Ascending aorta (tissue), 2 donors: ENCODE measurements at regions of chr6 and their contacts with region 1.

Region 1: GRCh38 chr6:28355743-28356665 is 6.3 kb downstream of the ZKSCAN3 start:
- DNase-seq: peak; percentile 23 to 86
- H3K4me3 ChIP-seq: peak overlapping the region; percentile 51 to 64
- H3K27ac ChIP-seq: peak overlapping the region; percentile 53 to 76
- H3K4me1 ChIP-seq: peaks cover 0 to 12% of the 10 kb centered on the region in 2 donors
- H3K27me3 ChIP-seq: no peaks in the 10 kb centered on the region
- CTCF ChIP-seq: peak; percentile 78 to 83 (median 80)

Region 2: GRCh38 chr6:27188885-27189418 is 1167.1 kb before region 1 on chr6:
- intact Hi-C with region 1: loop called (anchors 10 kb)
- DNase-seq: peak in 1 of 2 donors; percentile 76
- H3K4me3 ChIP-seq: peak overlapping the region; percentile 75 to 78
- H3K27ac ChIP-seq: peak overlapping the region; percentile 85 to 90
- H3K4me1 ChIP-seq: peaks cover 0 to 2% of the 10 kb centered on the region in 2 donors
- H3K27me3 ChIP-seq: no peaks in the 10 kb centered on the region
- CTCF ChIP-seq: peak; percentile 63 to 82 (median 71)

Region 3: DNA sequence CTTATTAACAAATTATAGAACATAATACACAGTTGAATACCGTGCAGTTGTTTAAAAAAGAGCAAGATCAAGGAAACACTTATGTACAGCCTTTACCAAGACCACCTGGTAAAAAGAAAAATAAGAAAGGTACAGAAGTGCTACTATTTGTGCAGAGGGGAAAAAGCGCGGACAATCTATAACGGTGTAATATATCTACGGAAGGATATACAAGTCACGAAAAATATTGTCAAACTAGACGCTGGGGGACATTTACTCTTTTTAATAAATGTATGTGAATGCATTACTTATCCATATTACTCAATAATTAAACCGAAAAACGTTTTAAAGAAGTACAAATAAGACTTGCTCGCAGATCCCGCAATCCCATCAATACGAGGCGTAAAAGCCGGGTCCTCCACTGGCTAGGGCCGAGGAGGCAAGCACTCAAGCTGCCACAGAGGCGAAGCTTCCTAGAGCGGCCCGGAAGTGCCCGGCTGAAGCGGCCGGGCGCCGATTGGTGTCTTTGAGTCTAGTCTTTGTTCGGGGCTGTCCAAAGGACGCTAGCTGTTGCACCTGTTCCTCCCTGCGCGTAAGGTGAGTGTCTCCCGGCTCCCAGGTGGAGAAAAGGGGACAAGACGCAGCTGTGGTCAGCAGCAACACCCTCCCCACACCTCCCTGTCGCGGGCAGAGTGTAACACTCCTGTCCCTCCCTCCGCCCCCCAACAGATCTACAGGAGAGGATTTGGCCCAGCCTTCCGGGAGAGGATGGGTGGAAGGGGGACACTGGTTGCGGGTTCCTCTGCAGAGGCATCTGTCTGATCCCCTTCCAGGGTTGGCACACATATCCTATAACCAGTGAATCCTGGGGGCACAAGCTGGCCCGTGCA is 231.7 kb before region 1 on chr6 and contains the start of gene ZSCAN16:
- intact Hi-C with region 1: loop called (anchors 5 kb)
- DNase-seq: peak in 1 of 2 donors; percentile 89
- H3K4me3 ChIP-seq: peak within 1 kb of the TSS; percentile 72 to 84
- H3K27ac ChIP-seq: peak within 1 kb of the TSS; percentile 77 to 78
- H3K4me1 ChIP-seq: peaks cover 3 to 9% of the 10 kb centered on the region in 2 donors
- H3K27me3 ChIP-seq: no peaks in the 10 kb centered on the region
- CTCF ChIP-seq: no peak
- total RNA-seq, gene ZSCAN16: not detected

Region 4: DNA sequence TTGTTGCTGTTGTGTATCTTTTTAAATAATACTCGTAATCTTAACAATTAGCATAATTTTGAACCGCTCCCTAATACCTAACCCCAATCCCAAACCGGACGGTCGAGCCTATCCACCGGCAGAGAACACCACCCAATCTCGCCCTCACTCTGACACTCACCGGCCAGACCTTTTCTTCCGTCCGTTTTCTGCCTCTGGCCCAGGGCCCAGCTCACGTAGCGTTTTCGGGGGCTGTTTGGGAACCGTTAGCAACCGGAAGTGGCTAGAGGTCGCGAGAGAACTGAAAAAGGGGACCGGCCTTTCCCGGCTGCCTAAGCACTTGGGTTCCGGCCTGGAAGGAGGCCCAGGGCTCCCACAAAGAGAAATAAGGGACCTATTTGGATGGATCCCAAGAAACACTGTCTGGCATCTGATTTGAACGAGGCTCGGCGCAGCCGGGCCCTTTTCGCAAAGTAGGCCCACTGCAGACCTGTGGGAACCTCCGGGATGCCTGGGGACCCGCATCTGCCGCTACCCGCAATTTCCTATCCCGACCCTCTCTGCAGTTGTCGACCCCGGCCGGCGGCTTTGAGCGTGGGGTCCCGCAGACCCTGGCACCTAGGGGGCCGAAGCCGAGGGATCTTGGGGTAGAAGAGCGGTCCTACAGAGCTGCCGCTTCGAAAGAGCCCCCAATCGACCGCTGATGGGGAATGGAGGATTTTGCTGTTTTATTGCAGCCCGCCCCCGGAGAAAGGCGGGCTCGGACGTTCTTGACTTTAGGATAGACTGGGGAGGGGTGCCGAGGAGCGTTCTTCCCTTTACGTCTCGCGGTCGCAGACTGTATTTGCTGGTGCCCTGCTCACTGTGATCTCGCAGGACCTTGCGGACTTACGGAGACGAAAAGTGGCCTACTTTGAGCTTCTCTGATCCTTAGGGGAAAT is 219.2 kb before region 1 on chr6:
- intact Hi-C with region 1: loop called (anchors 2 kb)
- DNase-seq: peak; percentile 60 to 95
- H3K4me3 ChIP-seq: peak overlapping the region; percentile 74 to 97
- H3K27ac ChIP-seq: peak overlapping the region; percentile 95 to 98
- H3K4me1 ChIP-seq: peaks cover 0 to 26% of the 10 kb centered on the region in 2 donors
- H3K27me3 ChIP-seq: no peaks in the 10 kb centered on the region
- CTCF ChIP-seq: no peak

Region 5: GRCh38 chr6:28225056-28225834 is 130.8 kb before region 1 on chr6 and contains the start of gene ZSCAN9:
- intact Hi-C with region 1: loop called (anchors 2 kb)
- DNase-seq: peak; percentile 44 to 95
- H3K4me3 ChIP-seq: peak within 1 kb of the TSS; percentile 67 to 73
- H3K27ac ChIP-seq: peak within 1 kb of the TSS; percentile 75 to 80
- H3K4me1 ChIP-seq: peaks cover 0 to 4% of the 10 kb centered on the region in 2 donors
- H3K27me3 ChIP-seq: no peaks in the 10 kb centered on the region
- CTCF ChIP-seq: no peak
- total RNA-seq, gene ZSCAN9: 3.7 TPM

Region 6: GRCh38 chr6:28252009-28252975 is 103.7 kb before region 1 on chr6 and contains the start of gene ZKSCAN4:
- intact Hi-C with region 1: loop called (anchors 1 kb)
- DNase-seq: peak; percentile 25 to 84
- H3K4me3 ChIP-seq: peak within 1 kb of the TSS; percentile 72 to 73
- H3K27ac ChIP-seq: peak within 1 kb of the TSS; percentile 28 to 53
- H3K4me1 ChIP-seq: peaks cover 3 to 13% of the 10 kb centered on the region in 2 donors
- H3K27me3 ChIP-seq: no peaks in the 10 kb centered on the region
- CTCF ChIP-seq: no peak
- total RNA-seq, gene ZKSCAN4: 3.1 TPM